Heart left ventricle (tissue), 16 donors: ENCODE measurements at regions of chr15 and their contacts with region 1.

Region 1: DNA sequence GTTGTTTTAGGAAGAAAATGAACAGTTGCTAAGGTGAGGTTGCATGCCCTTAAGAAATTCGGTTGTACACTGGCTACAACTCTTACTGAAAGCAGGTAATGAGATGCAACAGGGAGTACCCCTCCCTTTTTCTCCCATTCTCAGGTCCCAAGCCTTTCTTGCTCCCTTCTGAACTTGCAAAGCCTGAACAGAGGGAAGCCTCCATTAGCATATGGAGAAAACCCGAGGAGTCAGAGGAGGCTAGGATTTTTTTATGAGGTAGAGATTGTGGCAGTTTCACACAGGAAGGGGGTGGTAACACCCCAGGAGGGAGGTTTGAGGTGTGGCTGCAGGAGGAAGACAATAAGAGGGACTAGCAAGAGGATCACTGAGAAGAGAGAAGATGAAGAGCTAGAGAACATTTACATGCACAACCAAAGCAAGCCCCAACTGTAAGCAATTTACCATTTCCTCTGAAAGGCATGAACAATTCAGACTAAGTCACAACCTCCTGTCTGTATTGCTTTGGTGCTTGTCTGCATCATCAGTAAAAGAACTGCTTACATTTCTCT is 322.7 kb downstream of the SV2B start:
- DNase-seq: no peak
- ATAC-seq: no peak
- H3K4me3 ChIP-seq: no peak overlapping the region
- H3K27ac ChIP-seq: no peak overlapping the region
- H3K4me1 ChIP-seq: peaks cover 0 to 4% (median 0%) of the 10 kb centered on the region in 12 donors
- H3K27me3 ChIP-seq: no peaks in the 10 kb centered on the region
- CTCF ChIP-seq: no peak
- POLR2A ChIP-seq: no peak

Region 2: GRCh38 chr15:91469632-91470567 is 47.1 kb after region 1 on chr15:
- intact Hi-C with region 1: loop called in 1 of 10 experiments (anchors 5 kb)
- DNase-seq: no peak
- ATAC-seq: peak in 2 of 4 donors; percentile 31 to 37
- H3K4me3 ChIP-seq: no peak overlapping the region
- H3K27ac ChIP-seq: peak overlapping the region in 1 of 12 donors; percentile 56
- H3K4me1 ChIP-seq: no peaks in the 10 kb centered on the region
- H3K27me3 ChIP-seq: no peaks in the 10 kb centered on the region
- CTCF ChIP-seq: no peak
- POLR2A ChIP-seq: no peak